ENCODE measurements at regions of chr1 and their contacts with region 1.

Region 1: GRCh38 chr1:220879076-220879508 is at the start of gene HLX:
- DNase-seq: peak; percentile 84
- ATAC-seq: peak; percentile 83
- H3K4me3 ChIP-seq: peak within 1 kb of the TSS; percentile 62 to 84 (median 75)
- H3K4me3 Mint-ChIP-seq: peak within 1 kb of the TSS; percentile 89
- H3K27ac ChIP-seq: peak within 1 kb of the TSS; percentile 25 to 53
- H3K27ac Mint-ChIP-seq: peak within 1 kb of the TSS; percentile 94
- H3K4me1 ChIP-seq: peaks cover 40 to 55% of the 10 kb centered on the region in 2 donors
- H3K4me1 Mint-ChIP-seq: peaks cover 59% of the 10 kb centered on the region
- H3K27me3 ChIP-seq: peaks cover 0 to 53% (median 23%) of the 10 kb centered on the region in 4 experiments
- H3K27me3 Mint-ChIP-seq: peaks cover 10% of the 10 kb centered on the region
- CTCF ChIP-seq: no peak
- total RNA-seq, gene HLX: 7.7 and 9.1 TPM in 2 replicates

Region 2: DNA sequence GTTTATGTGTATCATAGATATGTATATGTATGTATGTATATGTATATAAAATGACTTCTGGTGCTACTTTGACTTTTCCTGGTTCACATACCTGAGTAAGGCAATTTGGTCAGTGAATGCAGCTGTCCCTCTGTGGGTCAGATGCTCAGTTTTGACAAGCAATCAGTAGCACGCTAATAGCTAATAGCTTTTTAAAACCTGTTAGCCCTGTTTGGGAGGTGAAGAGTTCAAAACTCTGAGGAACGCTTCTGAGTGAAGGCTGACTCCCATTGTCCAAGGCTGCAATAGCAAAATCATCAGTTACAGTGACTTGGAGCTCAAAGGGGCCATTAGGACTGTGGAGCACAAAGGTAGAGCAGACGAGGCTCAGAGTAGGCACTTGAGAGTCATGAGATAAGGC is 283.9 kb before region 1 on chr1:
- CTCF ChIA-PET with region 1: no interaction called
- POLR2A ChIA-PET with region 1: no interaction called
- intact Hi-C with region 1: no loop called
- DNase-seq: no peak
- ATAC-seq: no peak
- H3K4me3 ChIP-seq: no peak overlapping the region
- H3K4me3 Mint-ChIP-seq: no peak overlapping the region
- H3K27ac ChIP-seq: no peak overlapping the region
- H3K27ac Mint-ChIP-seq: no peak overlapping the region
- H3K4me1 ChIP-seq: no peaks in the 10 kb centered on the region
- H3K4me1 Mint-ChIP-seq: no peaks in the 10 kb centered on the region
- H3K27me3 ChIP-seq: no peaks in the 10 kb centered on the region
- H3K27me3 Mint-ChIP-seq: no peaks in the 10 kb centered on the region
- CTCF ChIP-seq: no peak

Region 3: DNA sequence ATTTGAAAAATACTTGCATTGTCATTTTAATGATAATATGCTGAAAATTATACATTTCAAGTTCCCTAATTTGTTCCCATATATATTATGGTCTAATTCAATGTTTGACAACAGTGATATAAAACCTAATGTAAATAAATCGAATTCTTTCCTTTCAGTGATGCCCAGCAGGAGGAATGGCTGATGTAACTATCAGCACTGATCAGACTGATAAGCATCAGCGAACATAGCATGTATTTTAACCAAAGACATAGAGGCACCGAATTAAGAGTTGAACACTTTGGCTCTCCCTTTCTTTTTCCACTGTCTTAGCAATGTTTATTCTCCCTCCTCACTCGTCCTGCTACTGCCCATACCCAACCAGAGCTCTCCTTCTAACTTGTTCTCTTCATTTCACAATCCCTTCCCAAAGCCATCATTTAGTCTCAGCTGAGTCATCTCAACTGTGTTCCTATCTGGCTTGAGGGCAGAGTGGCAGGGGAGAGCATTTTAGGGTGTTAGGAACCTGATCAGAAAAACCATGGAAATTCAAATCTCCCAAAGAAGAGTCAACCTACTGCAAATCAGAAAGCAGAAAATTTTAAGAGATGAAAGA is 247.8 kb before region 1 on chr1:
- CTCF ChIA-PET with region 1: no interaction called
- POLR2A ChIA-PET with region 1: no interaction called
- intact Hi-C with region 1: no loop called
- DNase-seq: no peak
- ATAC-seq: no peak
- H3K4me3 ChIP-seq: no peak overlapping the region
- H3K4me3 Mint-ChIP-seq: no peak overlapping the region
- H3K27ac ChIP-seq: no peak overlapping the region
- H3K27ac Mint-ChIP-seq: no peak overlapping the region
- H3K4me1 ChIP-seq: no peaks in the 10 kb centered on the region
- H3K4me1 Mint-ChIP-seq: no peaks in the 10 kb centered on the region
- H3K27me3 ChIP-seq: no peaks in the 10 kb centered on the region
- H3K27me3 Mint-ChIP-seq: peaks cover 4% of the 10 kb centered on the region
- CTCF ChIP-seq: no peak

Region 4: GRCh38 chr1:220787069-220787614 is 92.0 kb before region 1 on chr1:
- CTCF ChIA-PET with region 1: no interaction called
- POLR2A ChIA-PET with region 1: no interaction called
- intact Hi-C with region 1: no loop called
- DNase-seq: peak; percentile 28
- ATAC-seq: peak; percentile 42
- H3K4me3 ChIP-seq: peak overlapping the region in 3 of 5 experiments; percentile 34 to 61 (median 49)
- H3K4me3 Mint-ChIP-seq: peak overlapping the region; percentile 80
- H3K27ac ChIP-seq: no peak overlapping the region
- H3K27ac Mint-ChIP-seq: no peak overlapping the region
- H3K4me1 ChIP-seq: peaks cover 11 to 14% of the 10 kb centered on the region in 2 donors
- H3K4me1 Mint-ChIP-seq: peaks cover 11% of the 10 kb centered on the region
- H3K27me3 ChIP-seq: peaks cover 0 to 22% (median 10%) of the 10 kb centered on the region in 4 experiments
- H3K27me3 Mint-ChIP-seq: peaks cover 18% of the 10 kb centered on the region
- CTCF ChIP-seq: no peak

Region 5: GRCh38 chr1:220889848-220890287 is 10.8 kb after region 1 on chr1:
- CTCF ChIA-PET with region 1: interaction called, 8 read pairs
- POLR2A ChIA-PET with region 1: interaction called, 6 read pairs
- intact Hi-C with region 1: loop called (anchors 1 kb)
- DNase-seq: no peak
- ATAC-seq: no peak
- H3K4me3 ChIP-seq: no peak overlapping the region
- H3K4me3 Mint-ChIP-seq: no peak overlapping the region
- H3K27ac ChIP-seq: no peak overlapping the region
- H3K27ac Mint-ChIP-seq: no peak overlapping the region
- H3K4me1 ChIP-seq: peaks cover 55 to 56% of the 10 kb centered on the region in 2 donors
- H3K4me1 Mint-ChIP-seq: peaks cover 47% of the 10 kb centered on the region
- H3K27me3 ChIP-seq: peaks cover 0 to 89% (median 66%) of the 10 kb centered on the region in 4 experiments
- H3K27me3 Mint-ChIP-seq: peaks cover 77% of the 10 kb centered on the region
- CTCF ChIP-seq: no peak

Region 6: DNA sequence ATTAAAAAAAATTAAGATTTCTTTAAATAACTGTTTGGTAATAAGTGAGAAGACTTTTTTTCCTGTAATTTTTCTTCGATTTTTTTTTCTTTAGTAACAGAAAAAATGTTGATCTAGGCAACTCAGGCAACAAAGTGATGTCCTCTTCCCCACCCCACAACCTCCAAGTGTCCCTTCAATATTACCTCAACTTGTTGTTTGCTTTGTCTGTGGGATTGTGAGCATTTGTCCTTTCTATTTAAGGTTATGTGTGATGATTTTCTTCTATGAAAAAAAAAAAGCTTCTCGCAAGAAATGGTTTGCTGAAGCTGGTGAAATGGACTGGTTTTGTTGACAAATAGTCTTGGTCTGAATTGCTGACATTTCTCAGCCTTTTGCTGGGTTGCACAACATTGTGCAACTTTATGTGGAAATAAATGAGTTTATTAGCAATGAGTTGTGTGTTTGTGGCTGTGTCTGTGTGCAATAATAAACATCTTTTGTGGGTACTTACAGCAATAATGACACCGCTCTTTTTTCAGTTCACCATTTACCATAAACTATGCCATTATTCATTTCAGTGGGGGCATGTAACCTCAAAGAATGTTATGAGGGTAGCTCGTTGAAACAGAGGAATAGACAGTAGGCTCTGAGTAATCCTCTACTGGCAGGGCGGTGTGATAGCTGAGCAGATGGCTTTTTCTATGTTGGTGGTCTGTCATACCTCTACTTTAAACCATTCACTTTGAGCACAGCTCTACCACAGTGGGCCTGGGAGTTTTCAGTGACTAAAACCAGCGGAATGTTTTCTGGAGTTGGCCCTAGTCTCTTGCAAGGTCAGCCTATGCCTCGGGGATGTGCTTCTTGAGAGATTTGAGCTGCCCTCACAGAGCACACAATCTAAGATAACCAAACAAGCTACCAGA is 218.6 kb after region 1 on chr1:
- CTCF ChIA-PET with region 1: interaction called, 43 read pairs
- POLR2A ChIA-PET with region 1: no interaction called
- intact Hi-C with region 1: loop called (anchors 1 kb)
- DNase-seq: no peak
- ATAC-seq: no peak
- H3K4me3 ChIP-seq: no peak overlapping the region
- H3K4me3 Mint-ChIP-seq: no peak overlapping the region
- H3K27ac ChIP-seq: no peak overlapping the region
- H3K27ac Mint-ChIP-seq: no peak overlapping the region
- H3K4me1 ChIP-seq: peaks cover 17 to 19% of the 10 kb centered on the region in 2 donors
- H3K4me1 Mint-ChIP-seq: peaks cover 25% of the 10 kb centered on the region
- H3K27me3 ChIP-seq: no peaks in the 10 kb centered on the region
- H3K27me3 Mint-ChIP-seq: no peaks in the 10 kb centered on the region
- CTCF ChIP-seq: no peak

Region 7: GRCh38 chr1:221203224-221204054 is 324.3 kb after region 1 on chr1:
- CTCF ChIA-PET with region 1: interaction called, 259 read pairs
- POLR2A ChIA-PET with region 1: interaction called, 3 read pairs
- intact Hi-C with region 1: loop called (anchors 1 kb)
- DNase-seq: peak; percentile 82
- ATAC-seq: peak; percentile 66
- H3K4me3 ChIP-seq: no peak overlapping the region
- H3K4me3 Mint-ChIP-seq: no peak overlapping the region
- H3K27ac ChIP-seq: no peak overlapping the region
- H3K27ac Mint-ChIP-seq: no peak overlapping the region
- H3K4me1 ChIP-seq: peaks cover 3% of the 10 kb centered on the region in 2 donors
- H3K4me1 Mint-ChIP-seq: peaks cover 3% of the 10 kb centered on the region
- H3K27me3 ChIP-seq: peaks cover 0 to 4% (median 2%) of the 10 kb centered on the region in 4 experiments
- H3K27me3 Mint-ChIP-seq: peaks cover 18% of the 10 kb centered on the region
- CTCF ChIP-seq: peak; percentile 98

Region 8: DNA sequence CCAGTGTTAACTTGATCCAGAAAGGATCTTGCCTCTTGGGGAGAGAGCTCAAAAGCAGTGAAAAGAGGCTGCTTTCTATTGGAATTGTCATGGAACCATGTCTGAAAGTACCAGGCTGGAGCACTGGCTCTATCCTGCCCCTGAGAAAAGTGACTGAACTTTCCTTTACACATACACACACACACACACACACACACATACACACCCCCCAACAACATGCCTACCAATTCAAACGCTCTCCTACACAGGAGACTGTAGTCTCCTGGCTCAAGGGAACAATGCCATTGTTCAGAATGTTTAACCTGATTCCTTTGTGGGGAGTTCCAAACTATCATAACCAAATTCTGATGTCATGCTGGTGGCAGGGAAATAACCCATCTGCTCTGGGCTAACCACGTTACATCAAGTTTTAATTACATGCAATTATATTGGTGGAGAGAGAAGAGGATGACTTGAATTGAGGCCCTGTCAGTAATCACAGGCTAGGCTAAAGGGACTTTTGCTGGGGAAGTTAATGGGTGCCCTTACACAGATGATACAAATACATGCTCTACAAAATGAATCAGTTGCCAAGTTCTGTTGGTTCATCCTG is 915.1 kb after region 1 on chr1:
- CTCF ChIA-PET with region 1: no interaction called
- POLR2A ChIA-PET with region 1: no interaction called
- intact Hi-C with region 1: loop called (anchors 10 kb)
- DNase-seq: peak; percentile 92
- ATAC-seq: peak; percentile 71
- H3K4me3 ChIP-seq: peak overlapping the region in 2 of 5 experiments; percentile 2 to 44
- H3K4me3 Mint-ChIP-seq: peak overlapping the region; percentile 69
- H3K27ac ChIP-seq: peak overlapping the region; percentile 87 to 99
- H3K27ac Mint-ChIP-seq: peak overlapping the region; percentile 92
- H3K4me1 ChIP-seq: peaks cover 36 to 37% of the 10 kb centered on the region in 2 donors
- H3K4me1 Mint-ChIP-seq: peaks cover 45% of the 10 kb centered on the region
- H3K27me3 ChIP-seq: no peaks in the 10 kb centered on the region
- H3K27me3 Mint-ChIP-seq: no peaks in the 10 kb centered on the region
- CTCF ChIP-seq: no peak

Measured in B cell (primary cell).